B cell (primary cell): ENCODE measurements at regions of chr16 and their contacts with region 1.

Region 1: GRCh38 chr16:31507929-31508705 is at the start of gene RUSF1:
- DNase-seq: peak; percentile 87
- ATAC-seq: peak; percentile 94
- H3K4me3 ChIP-seq: peak within 1 kb of the TSS; percentile 36 to 95 (median 87)
- H3K4me3 Mint-ChIP-seq: peak within 1 kb of the TSS; percentile 92
- H3K27ac ChIP-seq: peak within 1 kb of the TSS; percentile 80 to 88
- H3K27ac Mint-ChIP-seq: peak within 1 kb of the TSS; percentile 95
- H3K4me1 ChIP-seq: peaks cover 32 to 33% of the 10 kb centered on the region in 2 donors
- H3K4me1 Mint-ChIP-seq: peaks cover 43% of the 10 kb centered on the region
- H3K27me3 ChIP-seq: no peaks in the 10 kb centered on the region
- H3K27me3 Mint-ChIP-seq: no peaks in the 10 kb centered on the region
- CTCF ChIP-seq: no peak
- total RNA-seq, gene RUSF1: 98.8 and 103 TPM in 2 replicates

Region 2: GRCh38 chr16:31476303-31477219 is 31.6 kb before region 1 on chr16:
- CTCF ChIA-PET with region 1: no interaction called
- POLR2A ChIA-PET with region 1: no interaction called
- intact Hi-C with region 1: loop called (anchors 1 kb)
- DNase-seq: peak; percentile 81
- ATAC-seq: peak; percentile 91
- H3K4me3 ChIP-seq: peak overlapping the region in 4 of 5 experiments; percentile 57 to 65 (median 62)
- H3K4me3 Mint-ChIP-seq: peak overlapping the region; percentile 90
- H3K27ac ChIP-seq: no peak overlapping the region
- H3K27ac Mint-ChIP-seq: peak overlapping the region; percentile 83
- H3K4me1 ChIP-seq: peaks cover 19 to 28% of the 10 kb centered on the region in 2 donors
- H3K4me1 Mint-ChIP-seq: peaks cover 33% of the 10 kb centered on the region
- H3K27me3 ChIP-seq: peaks cover 0 to 21% (median 8%) of the 10 kb centered on the region in 4 experiments
- H3K27me3 Mint-ChIP-seq: peaks cover 8% of the 10 kb centered on the region
- CTCF ChIP-seq: no peak

Region 3: DNA sequence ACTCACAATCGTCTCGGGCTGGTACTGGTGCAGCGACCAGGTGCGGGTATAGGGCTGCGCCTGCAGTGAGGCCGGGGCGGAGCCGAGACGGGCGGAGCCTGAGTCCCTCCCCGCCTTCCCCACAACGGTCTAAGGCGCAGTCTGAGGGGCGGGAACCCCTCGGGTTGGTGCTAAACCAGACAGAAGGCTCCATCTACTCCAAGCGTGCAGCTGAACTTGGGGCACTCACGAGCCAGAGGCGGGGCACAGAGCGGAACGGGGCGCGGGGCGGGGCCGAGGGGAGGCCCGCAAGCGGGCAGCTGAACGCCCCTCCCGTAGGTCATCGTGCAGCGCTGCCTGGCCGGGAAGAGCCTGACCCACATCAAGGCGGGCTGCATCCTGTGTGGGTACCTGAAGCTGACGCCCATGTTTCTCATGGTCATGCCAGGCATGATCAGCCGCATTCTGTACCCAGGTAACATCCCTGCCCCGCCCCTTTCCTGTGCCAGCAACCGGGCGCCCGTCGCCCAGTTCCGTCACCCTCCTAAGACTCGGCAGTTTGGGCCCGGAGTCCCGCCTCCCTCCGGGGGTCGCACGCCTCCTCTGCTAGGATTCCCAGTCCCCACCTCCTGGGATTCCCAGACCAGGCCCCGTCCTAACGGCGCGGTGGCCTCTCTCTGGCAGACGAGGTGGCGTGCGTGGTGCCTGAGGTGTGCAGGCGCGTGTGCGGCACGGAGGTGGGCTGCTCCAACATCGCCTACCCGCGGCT is 20.2 kb before region 1 on chr16:
- CTCF ChIA-PET with region 1: no interaction called
- POLR2A ChIA-PET with region 1: no interaction called
- intact Hi-C with region 1: loop called (anchors 1 kb)
- DNase-seq: peak; percentile 76
- ATAC-seq: peak; percentile 92
- H3K4me3 ChIP-seq: peak overlapping the region; percentile 12 to 72 (median 56)
- H3K4me3 Mint-ChIP-seq: peak overlapping the region; percentile 96
- H3K27ac ChIP-seq: no peak overlapping the region
- H3K27ac Mint-ChIP-seq: peak overlapping the region; percentile 79
- H3K4me1 ChIP-seq: peaks cover 10 to 16% of the 10 kb centered on the region in 2 donors
- H3K4me1 Mint-ChIP-seq: peaks cover 12% of the 10 kb centered on the region
- H3K27me3 ChIP-seq: peaks cover 0 to 12% (median 4%) of the 10 kb centered on the region in 4 experiments
- H3K27me3 Mint-ChIP-seq: peaks cover 4% of the 10 kb centered on the region
- CTCF ChIP-seq: no peak

Region 4: GRCh38 chr16:31713071-31713944 is 205.2 kb after region 1 on chr16:
- CTCF ChIA-PET with region 1: no interaction called
- POLR2A ChIA-PET with region 1: no interaction called
- intact Hi-C with region 1: loop called (anchors 1 kb)
- DNase-seq: peak; percentile 93
- ATAC-seq: peak; percentile 96
- H3K4me3 ChIP-seq: peak overlapping the region; percentile 85 to 98 (median 89)
- H3K4me3 Mint-ChIP-seq: peak overlapping the region; percentile 98
- H3K27ac ChIP-seq: peak overlapping the region; percentile 89 to 93
- H3K27ac Mint-ChIP-seq: peak overlapping the region; percentile 98
- H3K4me1 ChIP-seq: peaks cover 30 to 31% of the 10 kb centered on the region in 2 donors
- H3K4me1 Mint-ChIP-seq: peaks cover 44% of the 10 kb centered on the region
- H3K27me3 ChIP-seq: no peaks in the 10 kb centered on the region
- H3K27me3 Mint-ChIP-seq: no peaks in the 10 kb centered on the region
- CTCF ChIP-seq: peak; percentile 15

Region 5: DNA sequence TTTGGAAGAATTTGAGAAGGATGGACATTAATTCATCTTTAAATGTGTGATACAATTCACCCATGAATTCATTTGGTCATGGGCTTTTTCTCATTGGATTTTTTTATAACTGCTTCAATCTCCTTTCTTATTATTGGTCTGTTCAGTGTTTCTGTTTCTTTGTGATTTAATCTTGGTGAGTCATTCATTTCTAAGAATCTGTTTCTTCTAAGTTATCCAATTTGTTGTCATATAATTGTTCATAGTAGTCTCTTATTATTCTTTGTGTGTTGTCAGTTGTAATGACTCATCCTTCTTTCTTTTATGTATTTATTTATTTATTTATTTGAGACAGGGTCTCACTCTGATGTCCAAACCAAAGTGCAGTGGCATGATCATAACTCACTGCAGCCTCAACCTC is 219.4 kb after region 1 on chr16:
- CTCF ChIA-PET with region 1: no interaction called
- POLR2A ChIA-PET with region 1: no interaction called
- intact Hi-C with region 1: no loop called
- DNase-seq: no peak
- ATAC-seq: no peak
- H3K4me3 ChIP-seq: no peak overlapping the region
- H3K4me3 Mint-ChIP-seq: no peak overlapping the region
- H3K27ac ChIP-seq: no peak overlapping the region
- H3K27ac Mint-ChIP-seq: no peak overlapping the region
- H3K4me1 ChIP-seq: no peaks in the 10 kb centered on the region
- H3K4me1 Mint-ChIP-seq: no peaks in the 10 kb centered on the region
- H3K27me3 ChIP-seq: no peaks in the 10 kb centered on the region
- H3K27me3 Mint-ChIP-seq: no peaks in the 10 kb centered on the region
- CTCF ChIP-seq: no peak